ENCODE measurements at regions of chrX and their contacts with region 1.

Region 1: DNA sequence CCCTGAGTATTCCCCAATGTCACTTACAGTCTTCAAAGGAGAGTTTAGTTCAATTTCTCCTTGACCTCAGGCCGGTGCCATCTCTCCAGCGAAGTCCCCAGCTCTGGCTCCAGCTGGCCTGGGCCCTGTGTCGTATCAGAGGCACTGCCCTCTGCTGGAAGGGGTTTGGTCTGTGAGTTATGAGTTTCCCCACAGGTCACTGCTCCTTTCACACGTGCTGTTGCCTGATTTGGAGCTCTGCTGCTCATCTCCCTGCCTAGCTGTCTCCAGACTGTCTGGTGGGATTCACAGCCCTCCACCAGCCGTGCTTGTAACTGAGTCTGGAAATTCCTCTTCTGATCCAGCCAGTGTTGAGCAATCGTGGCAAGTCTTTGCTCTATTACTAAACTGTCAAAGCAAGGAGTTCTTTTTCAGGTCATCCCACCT is at the start of gene RAP2C:
- DNase-seq: peak; percentile 47
- H3K4me3 Mint-ChIP-seq: peak within 1 kb of the TSS; percentile 91
- H3K27ac Mint-ChIP-seq: peak within 1 kb of the TSS; percentile 92
- H3K4me1 Mint-ChIP-seq: peaks cover 19% of the 10 kb centered on the region
- H3K27me3 Mint-ChIP-seq: no peaks in the 10 kb centered on the region
- total RNA-seq, gene RAP2C: 40.1 and 42.1 TPM in 2 replicates

Region 2: GRCh38 chrX:132022967-132023895 is 196.1 kb before region 1 on chrX and contains the start of gene STK26:
- intact Hi-C with region 1: loop called (anchors 1 kb)
- DNase-seq: peak; percentile 77
- H3K4me3 Mint-ChIP-seq: peak within 1 kb of the TSS; percentile 91
- H3K27ac Mint-ChIP-seq: peak within 1 kb of the TSS; percentile 94
- H3K4me1 Mint-ChIP-seq: peaks cover 22% of the 10 kb centered on the region
- H3K27me3 Mint-ChIP-seq: no peaks in the 10 kb centered on the region
- total RNA-seq, gene STK26: 108 and 115 TPM in 2 replicates

Region 3: GRCh38 chrX:132092439-132093065 is 126.8 kb before region 1 on chrX:
- intact Hi-C with region 1: loop called (anchors 1 kb)
- DNase-seq: peak; percentile 14
- H3K4me3 Mint-ChIP-seq: no peak overlapping the region
- H3K27ac Mint-ChIP-seq: no peak overlapping the region
- H3K4me1 Mint-ChIP-seq: peaks cover 11% of the 10 kb centered on the region
- H3K27me3 Mint-ChIP-seq: no peaks in the 10 kb centered on the region

Region 4: DNA sequence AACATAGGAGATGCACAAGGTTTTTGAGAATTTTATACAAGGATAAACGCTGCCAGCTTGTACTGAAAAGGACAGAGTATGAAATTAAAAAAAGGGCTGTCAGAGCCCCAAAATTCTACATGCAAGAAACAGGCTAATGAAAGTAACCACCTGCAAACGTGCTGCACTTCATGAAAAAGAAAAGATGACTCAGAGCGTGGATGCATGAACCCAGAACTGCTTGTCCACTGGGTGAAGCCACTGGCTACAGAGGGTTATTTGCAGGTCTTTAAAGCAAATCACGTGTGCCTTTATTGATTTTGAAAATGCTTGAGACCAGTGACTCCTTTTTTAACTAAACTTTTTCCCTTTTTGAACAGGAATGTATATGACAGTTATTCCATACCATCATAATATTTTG is 66.2 kb before region 1 on chrX:
- intact Hi-C with region 1: no loop called
- DNase-seq: no peak
- H3K4me3 Mint-ChIP-seq: no peak overlapping the region
- H3K27ac Mint-ChIP-seq: no peak overlapping the region
- H3K4me1 Mint-ChIP-seq: no peaks in the 10 kb centered on the region
- H3K27me3 Mint-ChIP-seq: peaks cover 10% of the 10 kb centered on the region

Region 5: DNA sequence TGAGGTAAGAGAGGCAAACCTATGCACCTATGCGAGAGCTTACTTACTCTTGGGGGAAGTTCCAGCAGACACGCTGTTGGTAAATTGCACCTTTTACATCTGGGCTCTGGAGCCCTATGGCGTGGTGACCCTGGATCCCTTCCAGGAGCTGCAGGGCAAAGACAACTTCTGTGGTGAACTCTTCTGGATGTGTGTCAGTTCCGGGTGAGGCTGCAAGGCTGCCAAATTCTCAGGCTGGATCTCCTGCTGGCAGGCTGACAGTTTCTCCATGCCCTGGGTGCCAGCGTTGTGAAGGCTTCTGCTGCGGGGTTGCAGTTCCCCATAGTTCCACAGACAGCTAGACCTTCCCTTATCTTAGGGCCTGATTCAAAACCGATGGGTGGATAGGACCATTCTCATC is 38.0 kb before region 1 on chrX:
- intact Hi-C with region 1: no loop called
- DNase-seq: no peak
- H3K4me3 Mint-ChIP-seq: no peak overlapping the region
- H3K27ac Mint-ChIP-seq: no peak overlapping the region
- H3K4me1 Mint-ChIP-seq: no peaks in the 10 kb centered on the region
- H3K27me3 Mint-ChIP-seq: peaks cover 5% of the 10 kb centered on the region

Region 6: DNA sequence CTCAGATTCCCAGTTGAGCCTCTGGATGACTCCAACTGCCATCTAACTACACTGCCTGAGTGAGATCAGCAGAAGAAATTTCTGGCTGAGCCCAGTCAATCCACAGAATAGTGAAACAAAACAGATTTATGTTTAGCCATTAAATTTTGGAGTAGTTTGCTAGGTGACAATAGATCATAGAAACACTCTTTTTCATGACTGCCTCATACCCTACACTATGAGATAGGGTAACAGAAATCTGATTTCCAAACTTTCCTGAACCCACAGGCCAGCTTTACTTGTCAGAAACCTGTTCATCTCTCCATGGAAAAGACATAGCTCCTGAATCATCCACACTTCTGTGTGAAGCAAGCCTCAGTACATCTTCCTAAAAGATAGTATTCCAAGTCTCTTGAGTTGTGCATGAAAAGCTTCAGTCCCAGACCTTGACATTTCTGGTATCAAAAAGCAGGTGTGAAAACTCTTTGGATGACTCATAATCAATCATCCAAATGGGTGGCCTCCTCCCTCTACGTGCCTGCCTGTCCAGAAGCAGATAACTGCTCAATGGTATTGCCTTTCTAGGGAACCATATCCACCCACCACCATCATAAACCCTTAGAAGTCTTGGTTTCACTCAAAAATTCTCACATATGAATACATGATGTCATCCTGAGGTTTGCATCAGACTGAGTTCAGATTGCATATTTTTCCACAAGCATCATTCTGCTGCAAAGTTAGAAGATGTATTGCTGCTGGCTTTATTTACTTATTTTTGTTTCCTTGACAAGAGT is 47.4 kb after region 1 on chrX:
- intact Hi-C with region 1: loop called (anchors 2 kb)
- DNase-seq: no peak
- H3K4me3 Mint-ChIP-seq: no peak overlapping the region
- H3K27ac Mint-ChIP-seq: no peak overlapping the region
- H3K4me1 Mint-ChIP-seq: peaks cover 18% of the 10 kb centered on the region
- H3K27me3 Mint-ChIP-seq: no peaks in the 10 kb centered on the region

Region 7: GRCh38 chrX:132488819-132489577 is 269.6 kb after region 1 on chrX and contains the start of gene MBNL3:
- intact Hi-C with region 1: loop called (anchors 2 kb)
- DNase-seq: peak; percentile 45
- H3K4me3 Mint-ChIP-seq: peak within 1 kb of the TSS; percentile 94
- H3K27ac Mint-ChIP-seq: peak within 1 kb of the TSS; percentile 95
- H3K4me1 Mint-ChIP-seq: peaks cover 22% of the 10 kb centered on the region
- H3K27me3 Mint-ChIP-seq: no peaks in the 10 kb centered on the region
- total RNA-seq, gene MBNL3: 15.7 and 16.2 TPM in 2 replicates

Region 8: DNA sequence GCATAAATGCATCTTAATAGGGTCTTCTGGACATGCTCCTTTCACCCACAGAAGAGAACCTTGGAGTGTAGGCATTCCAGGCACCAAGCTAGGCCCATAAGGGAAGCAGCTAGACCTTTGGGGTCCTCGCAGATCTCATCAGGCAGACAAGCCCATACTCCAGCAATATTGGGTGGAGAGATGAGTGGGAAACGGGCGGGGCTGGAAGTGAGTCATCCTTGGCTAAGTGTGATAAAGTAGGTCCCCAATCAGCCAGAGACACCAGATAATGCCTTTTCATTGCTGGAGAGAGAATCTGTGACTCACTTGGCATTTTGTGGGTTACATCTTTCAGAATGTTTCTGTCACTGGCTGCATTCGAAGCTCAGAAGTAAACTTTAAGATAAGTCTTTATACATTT is 402.8 kb after region 1 on chrX:
- intact Hi-C with region 1: loop called (anchors 5 kb)
- DNase-seq: peak; percentile 9
- H3K4me3 Mint-ChIP-seq: no peak overlapping the region
- H3K27ac Mint-ChIP-seq: peak overlapping the region; percentile 82
- H3K4me1 Mint-ChIP-seq: peaks cover 12% of the 10 kb centered on the region
- H3K27me3 Mint-ChIP-seq: no peaks in the 10 kb centered on the region